Natural killer cell (primary cell): ENCODE measurements at regions of chr19 and their contacts with region 1.

Region 1: DNA sequence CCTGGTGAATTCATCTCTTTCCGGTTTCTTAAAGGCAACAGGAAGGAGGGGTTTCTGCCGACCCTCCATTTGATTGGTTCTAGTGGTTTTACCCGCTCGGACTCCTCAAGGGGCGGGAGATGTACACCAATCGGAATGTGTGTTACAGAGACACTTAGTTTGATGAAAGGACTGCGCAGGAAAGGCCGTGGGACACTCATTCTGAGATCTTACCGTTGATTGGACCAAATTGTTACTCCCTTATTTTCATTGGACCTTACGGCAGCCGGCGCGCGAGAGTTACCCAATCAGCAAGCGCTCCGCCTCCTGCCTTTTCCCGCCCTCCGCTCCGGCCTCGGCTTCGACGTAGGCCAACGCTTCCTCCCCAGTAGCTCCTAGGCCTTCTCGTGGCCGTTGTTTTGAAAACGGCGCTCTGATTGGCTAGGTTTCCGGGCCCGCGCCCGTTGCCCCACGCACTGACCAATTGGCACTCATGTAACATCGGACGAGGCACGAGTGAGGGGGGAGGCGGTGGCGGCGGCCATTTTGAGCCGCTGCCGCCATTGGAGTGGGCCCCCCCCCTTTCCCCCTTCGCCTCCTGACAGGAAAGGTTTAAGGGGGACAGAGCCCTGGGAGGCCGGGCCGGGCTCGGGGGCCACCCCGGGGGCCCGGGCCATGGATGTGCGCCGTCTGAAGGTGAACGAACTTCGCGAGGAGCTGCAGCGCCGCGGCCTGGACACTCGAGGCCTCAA is at the start of gene HNRNPUL1:
- DNase-seq: peak; percentile 99 to 100
- ATAC-seq: peak; percentile 69 to 86 (median 70)
- H3K4me3 ChIP-seq: peak within 1 kb of the TSS; percentile 57
- H3K4me3 Mint-ChIP-seq: peak within 1 kb of the TSS; percentile 91
- H3K27ac ChIP-seq: peak within 1 kb of the TSS; percentile 96
- H3K27ac Mint-ChIP-seq: peak within 1 kb of the TSS; percentile 96 to 100
- H3K4me1 ChIP-seq: peaks cover 39% of the 10 kb centered on the region
- H3K4me1 Mint-ChIP-seq: peaks cover 61 to 66% of the 10 kb centered on the region in 2 donors
- H3K27me3 ChIP-seq: no peaks in the 10 kb centered on the region
- H3K27me3 Mint-ChIP-seq: no peaks in the 10 kb centered on the region
- CTCF ChIP-seq: peak; percentile 34
- total RNA-seq, gene HNRNPUL1: 279 to 360 (median 315) TPM

Region 2: GRCh38 chr19:40465557-40466150 is 798.4 kb before region 1 on chr19 and contains the start of gene BLVRB:
- intact Hi-C with region 1: loop called (anchors 1 kb)
- DNase-seq: peak; percentile 100
- ATAC-seq: peak; percentile 62 to 87 (median 69)
- H3K4me3 ChIP-seq: peak within 1 kb of the TSS; percentile 70
- H3K4me3 Mint-ChIP-seq: peak within 1 kb of the TSS; percentile 84
- H3K27ac ChIP-seq: peak within 1 kb of the TSS; percentile 81
- H3K27ac Mint-ChIP-seq: peak within 1 kb of the TSS; percentile 88 to 93
- H3K4me1 ChIP-seq: peaks cover 37% of the 10 kb centered on the region
- H3K4me1 Mint-ChIP-seq: peaks cover 23 to 26% of the 10 kb centered on the region in 2 donors
- H3K27me3 ChIP-seq: peaks cover 6% of the 10 kb centered on the region
- H3K27me3 Mint-ChIP-seq: peaks cover 8 to 13% of the 10 kb centered on the region in 2 donors
- CTCF ChIP-seq: no peak
- total RNA-seq, gene BLVRB: 16.8 to 25.2 (median 18.3) TPM

Region 3: GRCh38 chr19:40831502-40832442 is 432.2 kb before region 1 on chr19:
- intact Hi-C with region 1: loop called (anchors 5 kb)
- DNase-seq: peak in 1 of 2 donors; percentile 2
- ATAC-seq: no peak
- H3K4me3 ChIP-seq: no peak overlapping the region
- H3K4me3 Mint-ChIP-seq: no peak overlapping the region
- H3K27ac ChIP-seq: no peak overlapping the region
- H3K27ac Mint-ChIP-seq: peak overlapping the region; percentile 27 to 85
- H3K4me1 ChIP-seq: peaks cover 16% of the 10 kb centered on the region
- H3K4me1 Mint-ChIP-seq: peaks cover 19 to 32% of the 10 kb centered on the region in 2 donors
- H3K27me3 ChIP-seq: no peaks in the 10 kb centered on the region
- H3K27me3 Mint-ChIP-seq: no peaks in the 10 kb centered on the region
- CTCF ChIP-seq: no peak

Region 4: DNA sequence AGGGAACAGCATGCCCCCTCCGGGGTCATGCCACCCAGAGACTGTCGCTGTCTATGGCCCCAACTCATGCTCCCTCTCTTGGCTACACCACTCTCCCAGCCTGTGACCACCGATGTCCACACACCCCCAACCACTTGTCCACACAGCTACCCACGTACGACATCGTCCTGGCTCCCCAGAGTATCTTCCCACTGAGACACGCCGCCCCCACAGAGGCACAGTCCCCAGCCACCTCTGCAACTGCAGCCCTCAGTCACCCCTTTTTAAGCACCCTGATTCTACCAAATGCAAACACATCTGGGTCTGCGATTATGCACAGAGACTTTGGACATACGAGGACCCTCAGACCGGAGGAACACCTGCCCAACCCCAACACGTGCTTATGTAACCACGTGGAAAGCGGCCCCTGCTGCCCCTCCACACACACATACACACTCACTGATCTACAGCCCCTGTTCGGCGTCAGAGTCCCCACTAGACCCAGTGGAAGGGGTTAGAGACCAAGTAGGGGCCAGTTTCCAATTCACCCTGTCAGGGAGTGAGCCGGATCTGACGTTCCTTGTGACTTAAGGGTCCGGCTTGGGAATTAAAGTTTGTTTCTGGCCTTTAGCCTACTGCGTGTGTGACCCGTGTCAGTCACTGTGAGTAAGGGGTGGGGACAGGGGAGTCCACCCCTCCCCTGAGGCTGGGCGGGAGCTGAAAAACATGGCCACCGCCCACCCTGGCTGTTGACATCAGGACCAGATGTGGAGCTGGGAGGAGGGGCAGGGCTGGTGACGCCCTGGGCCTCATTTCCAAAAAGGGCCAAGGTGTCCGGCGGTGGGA is 56.9 kb before region 1 on chr19:
- intact Hi-C with region 1: loop called (anchors 1 kb)
- DNase-seq: no peak
- ATAC-seq: no peak
- H3K4me3 ChIP-seq: no peak overlapping the region
- H3K4me3 Mint-ChIP-seq: no peak overlapping the region
- H3K27ac ChIP-seq: no peak overlapping the region
- H3K27ac Mint-ChIP-seq: no peak overlapping the region
- H3K4me1 ChIP-seq: no peaks in the 10 kb centered on the region
- H3K4me1 Mint-ChIP-seq: peaks cover 4 to 10% of the 10 kb centered on the region in 2 donors
- H3K27me3 ChIP-seq: no peaks in the 10 kb centered on the region
- H3K27me3 Mint-ChIP-seq: no peaks in the 10 kb centered on the region
- CTCF ChIP-seq: no peak

Region 5: GRCh38 chr19:41308392-41309179 is 44.6 kb after region 1 on chr19:
- intact Hi-C with region 1: loop called (anchors 1 kb)
- DNase-seq: peak; percentile 96 to 97
- ATAC-seq: peak; percentile 62 to 88 (median 66)
- H3K4me3 ChIP-seq: no peak overlapping the region
- H3K4me3 Mint-ChIP-seq: peak overlapping the region; percentile 96
- H3K27ac ChIP-seq: peak overlapping the region; percentile 97
- H3K27ac Mint-ChIP-seq: peak overlapping the region; percentile 91 to 94
- H3K4me1 ChIP-seq: peaks cover 76% of the 10 kb centered on the region
- H3K4me1 Mint-ChIP-seq: peaks cover 84% of the 10 kb centered on the region in 2 donors
- H3K27me3 ChIP-seq: no peaks in the 10 kb centered on the region
- H3K27me3 Mint-ChIP-seq: no peaks in the 10 kb centered on the region
- CTCF ChIP-seq: peak; percentile 90

Region 6: GRCh38 chr19:41353466-41354342 is 89.7 kb after region 1 on chr19 and contains the start of gene TGFB1:
- intact Hi-C with region 1: loop called (anchors 1 kb)
- DNase-seq: peak; percentile 92 to 97
- ATAC-seq: peak; percentile 64 to 88 (median 68)
- H3K4me3 ChIP-seq: peak within 1 kb of the TSS; percentile 90
- H3K4me3 Mint-ChIP-seq: peak within 1 kb of the TSS; percentile 93
- H3K27ac ChIP-seq: peak within 1 kb of the TSS; percentile 90
- H3K27ac Mint-ChIP-seq: peak within 1 kb of the TSS; percentile 90 to 96
- H3K4me1 ChIP-seq: peaks cover 66% of the 10 kb centered on the region
- H3K4me1 Mint-ChIP-seq: peaks cover 56 to 76% of the 10 kb centered on the region in 2 donors
- H3K27me3 ChIP-seq: no peaks in the 10 kb centered on the region
- H3K27me3 Mint-ChIP-seq: peaks cover 0 to 2% of the 10 kb centered on the region in 2 donors
- CTCF ChIP-seq: peak; percentile 84
- total RNA-seq, gene TGFB1: 682 to 761 (median 729) TPM

Region 7: GRCh38 chr19:41397086-41398049 is 133.4 kb after region 1 on chr19 and contains the starts of genes BCKDHA and EXOSC5:
- intact Hi-C with region 1: loop called (anchors 1 kb)
- DNase-seq: peak; percentile 97 to 100
- ATAC-seq: peak; percentile 96 to 100 (median 98)
- H3K4me3 ChIP-seq: peak within 1 kb of the TSS; percentile 94
- H3K4me3 Mint-ChIP-seq: peak within 1 kb of the TSS; percentile 97
- H3K27ac ChIP-seq: peak within 1 kb of the TSS; percentile 95
- H3K27ac Mint-ChIP-seq: peak within 1 kb of the TSS; percentile 99 to 100
- H3K4me1 ChIP-seq: peaks cover 29% of the 10 kb centered on the region
- H3K4me1 Mint-ChIP-seq: peaks cover 38 to 45% of the 10 kb centered on the region in 2 donors
- H3K27me3 ChIP-seq: no peaks in the 10 kb centered on the region
- H3K27me3 Mint-ChIP-seq: no peaks in the 10 kb centered on the region
- CTCF ChIP-seq: no peak
- total RNA-seq, gene BCKDHA: 26.5 to 29.0 (median 28.3) TPM
- total RNA-seq, gene EXOSC5: 9.0 to 11.6 (median 9.5) TPM

Region 8: DNA sequence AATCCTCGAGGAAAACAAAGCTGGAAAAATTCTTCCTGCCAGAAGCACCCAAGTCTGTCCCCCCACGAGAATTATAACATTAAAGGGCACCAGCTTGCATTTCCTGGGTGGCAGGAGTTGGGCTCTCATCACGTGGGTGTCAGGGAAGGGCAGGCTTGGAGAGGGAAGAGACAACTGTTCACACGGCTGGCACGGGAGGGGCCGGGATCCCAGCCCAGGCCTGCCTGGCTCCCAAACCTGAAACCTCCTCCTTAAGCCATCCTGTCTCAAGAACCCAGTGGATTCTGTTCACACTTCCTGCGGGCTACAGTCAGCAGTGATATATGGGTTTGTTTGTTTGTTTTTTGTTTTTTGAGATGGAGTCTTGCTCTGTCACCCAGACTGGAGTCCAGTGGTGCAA is 793.8 kb after region 1 on chr19:
- intact Hi-C with region 1: no loop called
- DNase-seq: no peak
- ATAC-seq: no peak
- H3K4me3 ChIP-seq: no peak overlapping the region
- H3K4me3 Mint-ChIP-seq: no peak overlapping the region
- H3K27ac ChIP-seq: no peak overlapping the region
- H3K27ac Mint-ChIP-seq: no peak overlapping the region
- H3K4me1 ChIP-seq: no peaks in the 10 kb centered on the region
- H3K4me1 Mint-ChIP-seq: no peaks in the 10 kb centered on the region
- H3K27me3 ChIP-seq: no peaks in the 10 kb centered on the region
- H3K27me3 Mint-ChIP-seq: peaks cover 0 to 8% of the 10 kb centered on the region in 2 donors
- CTCF ChIP-seq: no peak